ENCODE measurements at regions of chr7 and their contacts with region 1.

Region 1: GRCh38 chr7:136874238-136875032 is 6.0 kb downstream of the CHRM2 start:
- DNase-seq: peak; percentile 73
- ATAC-seq: peak; percentile 21
- H3K4me3 ChIP-seq: no peak overlapping the region
- H3K27ac ChIP-seq: peak overlapping the region; percentile 18; the same call in 1 of the 2 replicates
- H3K4me1 ChIP-seq: peaks cover 22% of the 10 kb centered on the region
- H3K27me3 ChIP-seq: no peaks in the 10 kb centered on the region
- CTCF ChIP-seq: peak; percentile 58
- POLR2A ChIP-seq: no peak
- RAD21 ChIP-seq: peak; percentile 34

Region 2: GRCh38 chr7:136405931-136406777 is 468.3 kb before region 1 on chr7:
- CTCF ChIA-PET with region 1: no interaction called
- POLR2A ChIA-PET with region 1: no interaction called
- dilution Hi-C with region 1: no loop called
- in situ Hi-C with region 1: no loop called
- intact Hi-C with region 1: loop called (anchors 5 kb)
- DNase-seq: peak; percentile 53
- ATAC-seq: peak; percentile 94
- H3K4me3 ChIP-seq: no peak overlapping the region
- H3K27ac ChIP-seq: no peak overlapping the region
- H3K4me1 ChIP-seq: no peaks in the 10 kb centered on the region
- H3K27me3 ChIP-seq: no peaks in the 10 kb centered on the region; the same call in 1 of the 2 replicates
- CTCF ChIP-seq: peak; percentile 68
- POLR2A ChIP-seq: no peak
- RAD21 ChIP-seq: peak; percentile 62

Region 3: GRCh38 chr7:136605532-136606329 is 268.7 kb before region 1 on chr7:
- CTCF ChIA-PET with region 1: no interaction called
- POLR2A ChIA-PET with region 1: no interaction called
- dilution Hi-C with region 1: no loop called
- in situ Hi-C with region 1: no loop called
- intact Hi-C with region 1: no loop called
- DNase-seq: no peak
- ATAC-seq: no peak
- H3K4me3 ChIP-seq: no peak overlapping the region
- H3K27ac ChIP-seq: no peak overlapping the region
- H3K4me1 ChIP-seq: no peaks in the 10 kb centered on the region
- H3K27me3 ChIP-seq: no peaks in the 10 kb centered on the region
- CTCF ChIP-seq: no peak
- POLR2A ChIP-seq: no peak
- RAD21 ChIP-seq: no peak

Region 4: DNA sequence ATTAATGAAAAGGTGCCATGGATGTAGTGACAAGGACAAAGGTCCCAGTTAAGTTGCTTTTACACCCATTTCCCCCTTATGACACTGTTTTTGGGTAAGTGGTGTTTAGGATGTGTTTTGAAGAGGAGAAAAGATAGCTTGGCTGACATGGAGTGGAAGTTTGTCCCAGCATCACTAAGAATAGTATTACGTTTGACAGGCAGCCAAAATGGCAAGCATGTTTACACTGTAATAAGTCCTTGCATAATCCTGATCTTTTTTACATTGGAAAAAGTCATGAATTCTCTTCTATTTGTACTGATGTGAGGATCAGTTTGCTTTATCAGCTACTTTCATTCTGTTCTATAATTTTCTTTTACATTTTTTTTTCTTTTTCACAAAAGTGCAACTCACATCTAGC is 131.9 kb after region 1 on chr7:
- CTCF ChIA-PET with region 1: no interaction called
- POLR2A ChIA-PET with region 1: no interaction called
- dilution Hi-C with region 1: no loop called
- in situ Hi-C with region 1: no loop called
- intact Hi-C with region 1: loop called (anchors 5 kb)
- DNase-seq: peak; percentile 87
- ATAC-seq: peak; percentile 30
- H3K4me3 ChIP-seq: no peak overlapping the region; the same call in 1 of the 2 replicates
- H3K27ac ChIP-seq: peak overlapping the region; percentile 3; the same call in 1 of the 2 replicates
- H3K4me1 ChIP-seq: peaks cover 23% of the 10 kb centered on the region
- H3K27me3 ChIP-seq: no peaks in the 10 kb centered on the region
- CTCF ChIP-seq: no peak
- POLR2A ChIP-seq: no peak
- RAD21 ChIP-seq: no peak

Region 5: GRCh38 chr7:137081321-137082093 is 207.1 kb after region 1 on chr7:
- CTCF ChIA-PET with region 1: no interaction called
- POLR2A ChIA-PET with region 1: no interaction called
- dilution Hi-C with region 1: no loop called
- in situ Hi-C with region 1: loop called (anchors 5 kb)
- intact Hi-C with region 1: loop called (anchors 5 kb)
- DNase-seq: peak; percentile 98
- ATAC-seq: peak; percentile 69
- H3K4me3 ChIP-seq: no peak overlapping the region
- H3K27ac ChIP-seq: peak overlapping the region; percentile 99
- H3K4me1 ChIP-seq: peaks cover 13% of the 10 kb centered on the region
- H3K27me3 ChIP-seq: no peaks in the 10 kb centered on the region
- CTCF ChIP-seq: no peak
- POLR2A ChIP-seq: no peak
- RAD21 ChIP-seq: no peak

Region 6: DNA sequence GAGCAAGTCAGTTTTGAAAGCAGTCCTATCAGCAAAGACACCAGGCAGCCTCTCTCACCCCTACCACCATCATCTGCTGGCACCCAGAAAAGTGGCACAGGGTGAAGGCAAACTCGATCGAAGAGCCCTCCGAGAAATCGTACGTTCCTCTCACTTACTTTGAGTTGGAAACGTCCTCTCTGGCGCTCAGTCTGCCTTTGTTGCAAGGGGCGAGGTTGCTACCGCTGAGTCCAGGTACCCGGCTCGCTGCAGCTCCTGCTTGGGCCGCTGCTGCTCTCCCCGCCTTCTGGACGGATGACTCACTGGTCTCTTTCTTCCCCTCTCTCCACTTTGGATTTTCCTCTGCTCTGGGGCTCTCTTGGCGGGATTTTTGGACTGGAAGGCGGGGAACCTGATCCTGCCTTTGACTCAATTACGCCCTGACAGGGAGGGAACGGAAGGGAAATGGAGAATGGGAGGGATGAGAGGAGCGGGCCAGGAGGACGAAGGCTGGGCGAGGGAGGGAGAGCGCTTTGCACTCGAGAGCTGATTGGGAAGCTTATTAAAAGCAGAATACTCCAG is 468.9 kb after region 1 on chr7 and contains the start of gene PTN:
- CTCF ChIA-PET with region 1: no interaction called
- POLR2A ChIA-PET with region 1: no interaction called
- dilution Hi-C with region 1: no loop called
- in situ Hi-C with region 1: no loop called
- intact Hi-C with region 1: loop called (anchors 5 kb)
- DNase-seq: peak; percentile 79
- ATAC-seq: peak; percentile 93
- H3K4me3 ChIP-seq: peak within 1 kb of the TSS; percentile 79
- H3K27ac ChIP-seq: peak within 1 kb of the TSS; percentile 63
- H3K4me1 ChIP-seq: no peaks in the 10 kb centered on the region; the same call in 1 of the 2 replicates
- H3K27me3 ChIP-seq: no peaks in the 10 kb centered on the region
- CTCF ChIP-seq: no peak
- POLR2A ChIP-seq: no peak
- RAD21 ChIP-seq: no peak; the same call in 1 of the 2 replicates
- total RNA-seq, gene PTN: 61.7 and 86.7 TPM in 2 replicates

Region 7: GRCh38 chr7:137579913-137580640 is 705.6 kb after region 1 on chr7:
- CTCF ChIA-PET with region 1: no interaction called
- POLR2A ChIA-PET with region 1: no interaction called
- dilution Hi-C with region 1: no loop called
- in situ Hi-C with region 1: loop called (anchors 10 kb)
- intact Hi-C with region 1: no loop called
- DNase-seq: peak; percentile 95
- ATAC-seq: peak; percentile 90
- H3K4me3 ChIP-seq: no peak overlapping the region
- H3K27ac ChIP-seq: peak overlapping the region; percentile 93
- H3K4me1 ChIP-seq: peaks cover 14% of the 10 kb centered on the region; the same call in 1 of the 2 replicates
- H3K27me3 ChIP-seq: no peaks in the 10 kb centered on the region
- CTCF ChIP-seq: no peak
- POLR2A ChIP-seq: no peak
- RAD21 ChIP-seq: peak; percentile 9; the same call in 1 of the 2 replicates